Heart left ventricle (tissue), 16 donors: ENCODE measurements at regions of chr5 and their contacts with region 1.

Region 1: DNA sequence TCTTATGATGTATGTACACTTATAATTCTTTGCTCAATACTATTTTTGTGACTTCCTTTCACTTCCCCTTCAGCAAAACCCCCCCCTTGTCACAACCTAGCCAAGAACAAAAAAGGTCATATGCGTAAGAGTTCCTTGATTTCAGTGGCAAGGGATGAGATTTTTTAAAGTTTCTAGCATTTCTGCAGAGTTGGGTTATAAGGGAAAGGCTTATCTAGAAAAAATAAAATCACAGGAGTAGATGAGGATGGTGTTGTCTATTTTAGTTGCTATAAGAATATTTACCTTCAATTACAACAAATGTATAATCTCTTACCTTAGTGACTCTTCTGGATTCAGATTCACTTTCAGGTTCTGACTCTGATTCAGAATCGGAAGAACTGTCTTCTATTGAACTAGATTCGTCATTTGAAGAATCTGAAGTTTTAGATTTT is 184.6 kb downstream of the AP3B1 start:
- DNase-seq: no peak
- ATAC-seq: no peak
- H3K4me3 ChIP-seq: no peak overlapping the region
- H3K27ac ChIP-seq: no peak overlapping the region
- H3K4me1 ChIP-seq: no peaks in the 10 kb centered on the region
- H3K27me3 ChIP-seq: no peaks in the 10 kb centered on the region
- CTCF ChIP-seq: no peak
- POLR2A ChIP-seq: no peak

Region 2: DNA sequence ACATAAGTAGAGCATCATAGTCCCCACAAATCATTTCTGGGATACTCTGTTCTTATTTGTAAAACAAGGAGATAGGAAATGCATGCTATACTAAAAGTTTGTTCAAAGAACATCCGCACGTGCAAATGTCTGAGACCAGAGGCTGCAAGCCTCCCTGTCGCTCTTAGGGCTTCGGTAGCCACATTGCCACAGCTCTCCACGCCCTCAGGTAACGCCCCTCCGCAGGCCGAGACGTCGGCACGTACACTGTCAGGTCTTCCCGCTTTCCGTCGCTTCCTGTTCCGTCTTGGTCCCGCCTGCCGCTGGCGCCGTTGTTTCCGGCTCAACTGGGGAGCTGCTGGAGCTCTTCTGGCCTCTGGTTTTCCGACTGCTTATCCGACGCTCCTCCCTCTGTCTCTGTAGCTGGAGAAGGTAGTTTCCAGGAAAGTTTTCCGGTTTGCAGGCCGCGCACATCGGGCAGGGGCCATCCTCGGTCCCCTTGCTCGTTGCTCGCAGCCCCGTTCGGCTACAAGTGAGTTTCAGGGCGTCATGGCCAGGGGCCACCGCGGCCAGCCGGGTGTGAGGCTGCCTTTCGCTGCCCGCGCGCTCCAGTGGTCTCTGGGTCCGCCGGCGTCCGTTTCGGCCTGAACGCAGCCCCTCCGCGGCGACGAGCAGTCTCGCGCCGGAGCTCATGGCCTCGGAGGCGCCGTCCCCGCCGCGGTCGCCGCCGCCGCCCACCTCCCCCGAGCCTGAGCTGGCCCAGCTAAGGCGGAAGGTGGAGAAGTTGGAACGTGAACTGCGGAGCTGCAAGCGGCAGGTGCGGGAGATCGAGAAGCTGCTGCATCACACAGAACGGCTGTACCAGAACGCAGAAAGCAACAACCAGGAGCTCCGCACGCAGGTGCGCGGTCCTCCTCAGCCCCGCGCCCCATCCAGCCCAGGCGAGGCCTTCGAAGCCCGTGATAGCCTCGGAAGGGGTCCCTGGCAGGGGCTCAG is 1079.5 kb before region 1 on chr5 and contains the start of gene AGGF1:
- intact Hi-C with region 1: no loop called
- DNase-seq: peak; percentile 94 to 97 (median 96)
- ATAC-seq: peak; percentile 100
- H3K4me3 ChIP-seq: peak within 1 kb of the TSS; percentile 82 to 100 (median 94)
- H3K27ac ChIP-seq: peak within 1 kb of the TSS; percentile 77 to 98 (median 90)
- H3K4me1 ChIP-seq: peaks cover 0 to 30% (median 17%) of the 10 kb centered on the region in 12 donors
- H3K27me3 ChIP-seq: no peaks in the 10 kb centered on the region
- CTCF ChIP-seq: no peak
- POLR2A ChIP-seq: peak in 1 of 2 donors; percentile 62
- total RNA-seq, gene AGGF1: 15.5 to 20.1 (median 16.7) TPM

Region 3: DNA sequence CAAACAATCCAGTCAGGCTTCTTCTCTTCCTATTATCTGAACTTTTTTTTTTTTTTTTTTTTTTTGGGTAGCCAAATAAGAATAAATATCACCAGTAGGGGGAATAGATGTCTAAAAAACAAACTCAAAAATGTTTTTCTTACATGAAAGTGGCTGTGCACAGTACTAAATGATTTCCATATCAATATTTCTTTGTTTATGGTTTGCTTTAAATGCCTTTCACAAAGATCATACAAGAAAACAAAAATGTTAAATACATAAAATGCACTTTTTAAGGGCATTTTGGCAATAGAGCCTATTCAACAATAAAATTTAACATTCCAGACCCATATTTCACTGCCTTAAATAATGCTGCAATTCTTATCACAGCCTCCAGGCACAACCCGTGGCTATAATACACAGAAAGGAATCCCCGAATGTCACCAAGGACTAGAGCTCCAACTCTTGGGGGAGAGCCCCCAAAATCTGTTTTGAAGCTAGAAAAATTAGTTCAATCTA is 242.7 kb before region 1 on chr5:
- intact Hi-C with region 1: no loop called
- DNase-seq: no peak
- ATAC-seq: no peak
- H3K4me3 ChIP-seq: no peak overlapping the region
- H3K27ac ChIP-seq: no peak overlapping the region
- H3K4me1 ChIP-seq: no peaks in the 10 kb centered on the region
- H3K27me3 ChIP-seq: peaks cover 0 to 7% (median 0%) of the 10 kb centered on the region in 9 donors
- CTCF ChIP-seq: peak in 6 of 12 donors; percentile 9 to 17 (median 13)
- POLR2A ChIP-seq: no peak

Region 4: DNA sequence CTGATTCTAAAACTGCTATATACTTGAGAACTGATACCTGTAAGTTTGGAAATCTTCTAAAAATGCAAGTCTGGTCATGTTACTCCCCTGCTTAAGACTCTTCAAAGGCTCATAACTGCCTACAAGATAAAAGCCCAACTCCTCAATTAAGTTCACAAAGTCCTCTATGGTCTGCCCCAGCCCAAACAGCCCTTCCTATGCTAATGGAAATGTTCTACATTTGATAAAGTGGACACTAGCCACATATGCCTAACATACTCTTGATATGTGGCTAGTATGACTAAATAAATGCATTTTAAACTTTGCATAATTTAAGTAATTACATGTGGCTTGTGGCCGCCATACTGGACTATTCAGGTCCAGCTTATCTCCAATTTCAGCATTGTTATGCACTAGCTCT is 19.9 kb before region 1 on chr5:
- intact Hi-C with region 1: loop called in 1 of 10 experiments (anchors 2 kb)
- DNase-seq: no peak
- ATAC-seq: no peak
- H3K4me3 ChIP-seq: no peak overlapping the region
- H3K27ac ChIP-seq: no peak overlapping the region
- H3K4me1 ChIP-seq: no peaks in the 10 kb centered on the region
- H3K27me3 ChIP-seq: no peaks in the 10 kb centered on the region
- CTCF ChIP-seq: no peak
- POLR2A ChIP-seq: no peak

Region 5: DNA sequence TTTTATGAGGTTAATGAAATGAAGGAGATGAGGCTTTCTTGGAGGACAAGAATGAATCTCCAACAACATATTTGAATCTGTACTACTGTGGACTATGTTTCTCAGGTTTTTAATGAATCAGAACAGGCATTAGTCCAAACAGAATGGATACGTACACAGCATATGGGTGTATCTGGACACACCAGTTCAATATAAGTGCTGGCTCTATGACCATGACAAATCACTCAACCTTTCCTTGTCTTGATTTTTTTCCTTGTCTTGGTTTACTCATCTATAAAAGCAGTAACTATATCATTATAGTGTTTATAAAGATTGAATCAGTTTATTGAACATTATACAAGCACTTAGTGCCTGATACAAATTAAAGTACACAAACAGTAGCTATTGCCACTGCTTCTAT is 80.5 kb after region 1 on chr5:
- intact Hi-C with region 1: no loop called
- DNase-seq: no peak
- ATAC-seq: no peak
- H3K4me3 ChIP-seq: no peak overlapping the region
- H3K27ac ChIP-seq: no peak overlapping the region
- H3K4me1 ChIP-seq: no peaks in the 10 kb centered on the region
- H3K27me3 ChIP-seq: no peaks in the 10 kb centered on the region
- CTCF ChIP-seq: no peak
- POLR2A ChIP-seq: no peak